Ascending aorta (tissue), 2 donors: ENCODE measurements at regions of chr7 and their contacts with region 1.

Region 1: DNA sequence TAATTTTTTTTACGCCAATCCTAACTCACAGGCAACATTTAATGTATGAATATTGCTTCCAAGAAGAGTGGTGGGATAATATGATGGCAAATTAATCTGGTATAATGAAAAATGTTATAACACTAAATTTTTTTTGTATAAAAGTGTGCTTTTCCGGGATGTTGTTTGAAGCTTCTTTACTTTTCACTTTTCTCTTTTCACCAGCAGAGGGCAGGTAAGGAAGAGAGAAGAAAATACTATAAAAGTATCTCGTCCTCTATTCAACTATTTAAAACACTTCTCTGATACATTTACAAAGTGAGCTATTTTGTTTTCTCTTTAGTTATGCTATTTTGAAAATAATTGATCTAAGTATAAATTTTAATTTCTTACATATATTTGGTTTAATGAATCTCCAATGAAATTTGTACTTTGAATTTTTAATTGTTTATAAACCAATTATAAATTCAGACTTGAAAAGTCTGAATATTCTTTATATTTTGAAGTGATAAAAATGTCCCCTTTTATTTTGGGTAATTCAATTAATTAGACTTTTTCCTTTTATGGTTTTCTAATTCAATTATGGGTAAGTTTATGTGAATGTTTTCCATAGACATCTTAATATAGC is 20.7 kb upstream of the CFTR start:
- DNase-seq: no peak
- H3K4me3 ChIP-seq: no peak overlapping the region
- H3K27ac ChIP-seq: no peak overlapping the region
- H3K4me1 ChIP-seq: no peaks in the 10 kb centered on the region
- H3K27me3 ChIP-seq: no peaks in the 10 kb centered on the region
- CTCF ChIP-seq: peak in 2 of 3 experiments; percentile 36 to 48

Region 2: GRCh38 chr7:116984917-116985316 is 474.2 kb before region 1 on chr7:
- intact Hi-C with region 1: no loop called
- DNase-seq: no peak
- H3K4me3 ChIP-seq: no peak overlapping the region
- H3K27ac ChIP-seq: no peak overlapping the region
- H3K4me1 ChIP-seq: no peaks in the 10 kb centered on the region
- H3K27me3 ChIP-seq: no peaks in the 10 kb centered on the region
- CTCF ChIP-seq: peak; percentile 38 to 69 (median 59)

Region 3: GRCh38 chr7:117639966-117640365 is 180.9 kb after region 1 on chr7:
- intact Hi-C with region 1: no loop called
- DNase-seq: no peak
- H3K4me3 ChIP-seq: no peak overlapping the region
- H3K27ac ChIP-seq: no peak overlapping the region
- H3K4me1 ChIP-seq: no peaks in the 10 kb centered on the region
- H3K27me3 ChIP-seq: no peaks in the 10 kb centered on the region
- CTCF ChIP-seq: no peak

Region 4: DNA sequence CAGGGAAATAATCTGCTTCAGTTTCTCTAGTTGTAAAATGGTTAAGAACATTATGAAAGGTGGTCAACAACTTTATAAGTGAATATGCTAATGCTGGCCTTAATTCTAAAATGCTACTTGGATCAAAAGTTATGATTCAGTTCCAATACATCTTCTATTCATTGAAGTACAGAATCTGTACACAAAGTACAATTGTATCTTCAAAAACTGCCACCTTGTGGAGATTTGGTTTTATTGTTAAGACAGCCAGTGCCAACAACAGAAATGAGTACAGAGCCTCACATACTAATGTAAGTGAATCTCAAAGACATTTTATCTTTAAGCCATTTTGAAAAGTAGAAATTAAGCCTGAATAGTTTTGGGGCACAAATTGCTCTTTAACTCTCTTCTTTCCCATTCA is 214.8 kb after region 1 on chr7:
- intact Hi-C with region 1: loop called (anchors 5 kb)
- DNase-seq: no peak
- H3K4me3 ChIP-seq: no peak overlapping the region
- H3K27ac ChIP-seq: no peak overlapping the region
- H3K4me1 ChIP-seq: no peaks in the 10 kb centered on the region
- H3K27me3 ChIP-seq: no peaks in the 10 kb centered on the region
- CTCF ChIP-seq: peak in 1 of 3 experiments; percentile 8

Region 5: DNA sequence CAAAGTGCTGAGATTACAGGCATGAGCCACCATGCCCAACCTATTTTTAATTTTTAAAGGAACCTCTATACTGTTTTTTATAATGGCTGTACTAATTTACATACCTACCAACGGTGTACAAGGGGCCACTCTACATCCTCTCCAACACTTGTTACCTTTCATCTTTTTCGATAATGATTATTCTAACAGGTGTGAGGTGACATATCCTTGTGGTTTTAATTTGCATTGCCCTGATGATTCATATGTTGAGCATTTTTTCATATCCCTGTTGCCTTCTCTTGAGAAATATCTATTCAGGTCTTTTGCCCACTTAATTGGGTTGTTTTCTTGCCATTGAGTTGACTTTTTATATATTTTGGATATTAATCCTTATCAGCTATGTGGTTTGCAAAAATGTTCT is 247.1 kb after region 1 on chr7:
- intact Hi-C with region 1: no loop called
- DNase-seq: no peak
- H3K4me3 ChIP-seq: no peak overlapping the region
- H3K27ac ChIP-seq: no peak overlapping the region
- H3K4me1 ChIP-seq: no peaks in the 10 kb centered on the region
- H3K27me3 ChIP-seq: no peaks in the 10 kb centered on the region
- CTCF ChIP-seq: no peak